Activated CD4-positive, alpha-beta memory T cell treated with anti-CD3 and anti-CD28 coated beads for 36 hours (primary cell): ENCODE measurements at regions of chr4 and their contacts with region 1.

Region 1: GRCh38 chr4:1289207-1290164 is at the start of gene MAEA:
- DNase-seq: peak; percentile 99
- H3K4me3 Mint-ChIP-seq: peak within 1 kb of the TSS; percentile 96
- H3K27ac Mint-ChIP-seq: peak within 1 kb of the TSS; percentile 87
- H3K4me1 Mint-ChIP-seq: peaks cover 31% of the 10 kb centered on the region
- H3K27me3 Mint-ChIP-seq: no peaks in the 10 kb centered on the region
- total RNA-seq, gene MAEA: 47.3 to 50.3 TPM

Region 2: GRCh38 chr4:1011022-1011694 is 278.3 kb before region 1 on chr4 and contains the start of gene FGFRL1:
- CTCF ChIA-PET with region 1: no interaction called
- POLR2A ChIA-PET with region 1: no interaction called
- intact Hi-C with region 1: loop called (anchors 5 kb)
- DNase-seq: peak; percentile 95
- H3K4me3 Mint-ChIP-seq: peak within 1 kb of the TSS; percentile 69
- H3K27ac Mint-ChIP-seq: peak within 1 kb of the TSS; percentile 76
- H3K4me1 Mint-ChIP-seq: peaks cover 10% of the 10 kb centered on the region
- H3K27me3 Mint-ChIP-seq: peaks cover 27% of the 10 kb centered on the region
- total RNA-seq, gene FGFRL1: 12.2 to 15.1 TPM

Region 3: GRCh38 chr4:1167247-1167949 is 122.1 kb before region 1 on chr4:
- CTCF ChIA-PET with region 1: interaction called, 19 read pairs
- POLR2A ChIA-PET with region 1: no interaction called
- intact Hi-C with region 1: loop called (anchors 1 kb)
- DNase-seq: peak; percentile 94
- H3K4me3 Mint-ChIP-seq: peak overlapping the region; percentile 74
- H3K27ac Mint-ChIP-seq: no peak overlapping the region
- H3K4me1 Mint-ChIP-seq: peaks cover 17% of the 10 kb centered on the region
- H3K27me3 Mint-ChIP-seq: peaks cover 12% of the 10 kb centered on the region

Region 4: DNA sequence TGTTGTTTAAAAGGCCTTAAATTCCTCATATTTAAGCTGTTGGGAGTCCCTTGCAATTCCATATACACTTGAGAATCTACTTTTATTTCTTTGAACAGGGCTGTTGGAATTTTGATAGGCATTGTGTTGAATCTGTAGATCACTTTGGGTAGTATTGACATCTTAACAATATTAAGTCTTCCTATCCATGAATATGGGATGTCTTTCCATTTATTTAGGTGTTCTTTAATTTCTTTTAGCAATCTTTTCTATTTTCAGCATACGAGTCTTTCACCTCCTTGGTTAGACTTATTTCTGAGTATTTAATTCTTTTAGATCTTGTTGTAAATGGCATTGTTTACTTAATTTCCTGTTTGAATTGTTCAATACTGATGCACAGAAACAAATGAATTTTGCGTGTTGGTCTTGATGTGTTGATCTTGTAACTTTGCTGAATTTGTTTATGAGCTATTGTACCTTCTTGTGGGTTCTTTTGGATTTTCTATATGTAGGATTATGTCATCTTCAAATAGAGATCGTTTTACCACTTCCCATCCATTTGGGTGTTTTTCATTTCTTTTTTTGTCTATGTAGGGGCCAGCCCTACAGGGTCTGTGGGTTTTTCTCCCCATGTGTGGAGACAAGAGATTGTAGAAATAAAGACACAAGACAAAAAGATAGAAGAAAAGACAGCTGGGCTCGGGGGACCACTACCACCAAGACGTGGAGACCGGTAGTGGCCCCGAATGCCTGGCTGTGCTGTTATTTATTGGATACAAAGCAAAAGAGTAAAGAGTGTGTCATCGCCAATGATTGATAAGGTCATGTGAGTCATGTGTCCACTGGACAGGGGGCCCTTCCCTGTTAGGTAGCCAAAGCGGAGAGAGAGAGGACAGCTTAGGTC is 22.4 kb before region 1 on chr4:
- CTCF ChIA-PET with region 1: interaction called, 28 read pairs
- POLR2A ChIA-PET with region 1: interaction called, 6 read pairs
- intact Hi-C with region 1: no loop called
- DNase-seq: no peak
- H3K4me3 Mint-ChIP-seq: peak overlapping the region; percentile 49
- H3K27ac Mint-ChIP-seq: peak overlapping the region; percentile 70
- H3K4me1 Mint-ChIP-seq: peaks cover 13% of the 10 kb centered on the region
- H3K27me3 Mint-ChIP-seq: no peaks in the 10 kb centered on the region

Region 5: DNA sequence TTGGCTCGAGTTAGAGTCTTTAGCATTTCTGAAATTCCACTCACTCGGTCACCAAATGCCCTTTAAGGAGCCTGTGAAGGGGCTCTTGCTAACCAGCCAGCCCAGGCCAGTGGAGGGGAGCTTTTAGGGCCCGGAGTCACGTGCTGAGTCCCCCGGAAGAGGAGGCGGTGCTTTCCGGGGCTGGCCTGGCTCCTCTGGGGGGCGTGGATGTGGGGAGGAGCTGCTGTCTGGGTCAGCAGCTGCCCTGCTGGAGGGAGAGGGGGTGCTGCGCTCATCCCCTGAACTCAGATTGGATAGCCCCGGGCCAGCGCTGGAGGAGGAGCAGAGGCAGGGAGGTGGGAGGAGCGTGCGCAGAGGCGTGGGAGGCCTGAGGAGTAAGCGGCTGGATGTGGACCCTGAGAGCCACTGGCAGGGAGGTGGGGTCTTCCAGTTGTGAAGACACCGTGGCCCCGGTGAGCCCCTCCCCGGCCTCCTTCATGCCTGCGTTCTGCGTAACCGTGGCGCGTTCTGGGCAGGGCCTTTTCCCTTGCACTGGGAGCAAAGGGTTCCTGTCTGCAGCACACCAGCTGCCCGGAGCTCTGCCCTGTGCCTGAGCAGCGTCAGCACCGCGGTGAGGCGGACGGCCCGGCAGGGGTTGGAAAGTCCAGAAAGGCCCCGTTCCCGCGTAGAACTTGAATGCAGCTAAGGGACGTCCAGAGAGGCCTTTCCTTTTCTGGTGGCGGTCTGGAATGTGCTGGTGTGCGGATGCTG is 19.9 kb after region 1 on chr4:
- CTCF ChIA-PET with region 1: interaction called, 5 read pairs
- POLR2A ChIA-PET with region 1: interaction called, 4 read pairs
- intact Hi-C with region 1: loop called (anchors 2 kb)
- DNase-seq: peak; percentile 74
- H3K4me3 Mint-ChIP-seq: peak overlapping the region; percentile 48
- H3K27ac Mint-ChIP-seq: peak overlapping the region; percentile 69
- H3K4me1 Mint-ChIP-seq: peaks cover 65% of the 10 kb centered on the region
- H3K27me3 Mint-ChIP-seq: no peaks in the 10 kb centered on the region